Activated naive CD4-positive, alpha-beta T cell treated with anti-CD3 and anti-CD28 coated beads for 36 hours (primary cell): ENCODE measurements at regions of chr5 and their contacts with region 1.

Region 1: GRCh38 chr5:169670769-169671525 is 33.9 kb downstream of the DOCK2 start:
- DNase-seq: peak; percentile 58
- H3K4me3 Mint-ChIP-seq: no peak overlapping the region
- H3K27ac Mint-ChIP-seq: no peak overlapping the region
- H3K4me1 Mint-ChIP-seq: peaks cover 16% of the 10 kb centered on the region
- H3K27me3 Mint-ChIP-seq: no peaks in the 10 kb centered on the region

Region 2: GRCh38 chr5:169494941-169495548 is 175.9 kb before region 1 on chr5:
- CTCF ChIA-PET with region 1: no interaction called
- intact Hi-C with region 1: no loop called
- DNase-seq: no peak
- H3K4me3 Mint-ChIP-seq: no peak overlapping the region
- H3K27ac Mint-ChIP-seq: no peak overlapping the region
- H3K4me1 Mint-ChIP-seq: no peaks in the 10 kb centered on the region
- H3K27me3 Mint-ChIP-seq: peaks cover 8% of the 10 kb centered on the region

Region 3: DNA sequence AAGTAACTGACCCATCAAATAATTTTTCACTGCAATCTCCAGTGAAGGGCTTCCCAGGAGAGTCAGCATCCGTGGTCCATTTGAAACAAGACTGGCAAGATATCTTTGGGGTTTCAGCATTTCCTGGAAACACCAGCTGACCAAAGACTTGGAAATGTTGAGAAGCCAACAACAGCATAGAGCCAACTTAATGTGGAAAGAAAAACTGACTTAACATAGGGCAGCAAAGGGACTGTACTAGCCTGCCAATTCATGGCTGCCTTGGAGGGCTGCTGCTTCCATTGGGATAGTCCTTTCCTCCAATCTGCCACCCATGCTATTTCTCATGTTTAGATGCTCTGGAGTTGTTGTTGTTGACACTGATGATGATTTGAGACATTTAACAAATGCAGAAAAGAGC is 163.9 kb before region 1 on chr5:
- CTCF ChIA-PET with region 1: no interaction called
- intact Hi-C with region 1: no loop called
- DNase-seq: no peak
- H3K4me3 Mint-ChIP-seq: no peak overlapping the region
- H3K27ac Mint-ChIP-seq: no peak overlapping the region
- H3K4me1 Mint-ChIP-seq: no peaks in the 10 kb centered on the region
- H3K27me3 Mint-ChIP-seq: peaks cover 9% of the 10 kb centered on the region

Region 4: GRCh38 chr5:169656125-169656901 is 14.6 kb before region 1 on chr5:
- CTCF ChIA-PET with region 1: interaction called, 4 read pairs
- intact Hi-C with region 1: loop called (anchors 1 kb)
- DNase-seq: peak; percentile 61
- H3K4me3 Mint-ChIP-seq: peak overlapping the region; percentile 29
- H3K27ac Mint-ChIP-seq: peak overlapping the region; percentile 77
- H3K4me1 Mint-ChIP-seq: peaks cover 61% of the 10 kb centered on the region
- H3K27me3 Mint-ChIP-seq: no peaks in the 10 kb centered on the region